Activated T-helper 1 cell treated with anti-CD3 and anti-CD28 coated beads, Interleukin-12 subunit alpha, Interleukin-12 subunit beta, Interleukin-2, Interleukin-4 antibody, amounts not matched to agents 30 ng/mL and 10 ng/mL and 1 ng/mL, durations not matched to agents 14 hours and 24 hours and 36 hours (primary cell): ENCODE measurements at regions of chr1 and their contacts with region 1.

Region 1: GRCh38 chr1:90964444-90965035 is 57.3 kb downstream of the ZNF644 start:
- DNase-seq: no peak
- H3K4me3 Mint-ChIP-seq: no peak overlapping the region
- H3K27ac Mint-ChIP-seq: no peak overlapping the region
- H3K4me1 Mint-ChIP-seq: peaks cover 15% of the 10 kb centered on the region
- H3K27me3 Mint-ChIP-seq: no peaks in the 10 kb centered on the region

Region 2: DNA sequence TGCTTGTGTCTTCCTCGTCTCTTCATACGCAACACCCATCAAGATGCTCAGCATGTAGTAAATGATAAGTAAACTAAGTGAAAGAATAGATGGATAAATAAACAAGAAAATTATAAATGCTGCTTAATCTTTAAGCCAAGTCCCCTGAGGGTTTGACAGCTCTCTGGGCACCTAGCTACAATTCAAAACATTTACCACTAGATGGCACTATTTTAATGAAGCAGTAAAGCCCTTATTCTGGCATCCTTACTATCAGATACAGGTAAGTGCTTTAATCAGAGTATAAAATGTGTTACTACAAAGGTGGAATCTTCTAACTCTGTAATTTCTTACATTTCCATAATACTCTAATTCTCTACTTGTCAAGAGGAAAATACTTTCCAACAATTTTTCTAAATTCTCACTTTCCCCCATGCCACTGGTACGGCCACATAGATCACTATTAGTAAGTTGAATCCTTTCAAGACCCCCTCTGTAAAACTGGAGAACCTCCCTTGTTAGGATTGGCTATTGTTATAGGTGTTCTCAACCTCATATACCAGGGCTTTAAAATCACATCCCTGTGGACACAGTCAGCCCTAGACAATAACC is 385.2 kb before region 1 on chr1:
- intact Hi-C with region 1: loop called (anchors 10 kb)
- DNase-seq: no peak
- H3K4me3 Mint-ChIP-seq: no peak overlapping the region
- H3K27ac Mint-ChIP-seq: no peak overlapping the region
- H3K4me1 Mint-ChIP-seq: no peaks in the 10 kb centered on the region
- H3K27me3 Mint-ChIP-seq: peaks cover 5% of the 10 kb centered on the region

Region 3: DNA sequence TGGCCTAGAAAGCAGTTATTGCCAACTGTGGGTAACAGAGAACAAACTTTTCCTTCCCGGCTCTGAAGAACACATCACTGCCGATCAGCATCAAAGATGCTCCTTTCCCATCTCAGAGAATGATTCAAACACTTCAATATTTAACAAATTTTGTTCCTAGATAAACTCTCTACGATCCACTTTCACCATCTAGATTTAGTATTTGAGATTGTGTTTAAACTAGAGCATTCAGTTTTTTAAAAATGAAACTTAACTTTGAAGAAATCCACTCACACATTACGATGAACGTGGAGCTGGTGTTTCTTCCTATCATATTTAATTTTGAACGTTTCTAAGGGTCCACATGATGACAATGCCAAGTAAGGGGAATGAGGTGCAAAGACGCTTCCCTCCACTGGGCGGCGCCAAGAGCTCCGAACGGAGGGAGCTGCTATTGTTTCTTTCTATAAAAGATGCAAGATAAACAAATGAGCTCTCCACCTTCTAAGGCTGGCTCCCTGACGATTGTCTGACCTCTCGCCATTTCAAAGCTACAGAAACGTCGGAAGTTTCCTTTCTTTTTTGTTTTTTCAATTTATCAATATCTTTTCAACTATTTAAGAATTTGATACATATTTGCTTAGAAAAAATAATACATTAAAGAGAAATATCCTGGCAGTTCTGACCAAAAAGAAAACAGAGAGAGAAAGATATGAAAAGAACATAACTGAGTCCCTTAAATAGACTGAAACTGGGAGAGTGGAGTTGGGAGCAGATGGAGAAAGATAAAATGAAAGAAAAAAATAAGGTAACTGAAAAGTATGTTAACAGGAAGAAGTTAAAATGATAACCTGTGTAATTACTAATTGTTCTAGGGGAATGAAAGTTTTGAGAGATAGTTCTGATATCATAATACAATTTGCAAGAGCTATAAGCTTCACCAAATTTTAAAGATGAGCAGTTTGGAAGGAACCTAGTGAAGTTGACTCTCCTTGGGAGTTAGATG is 243.0 kb before region 1 on chr1:
- intact Hi-C with region 1: loop called (anchors 1 kb)
- DNase-seq: peak; percentile 35
- H3K4me3 Mint-ChIP-seq: no peak overlapping the region
- H3K27ac Mint-ChIP-seq: peak overlapping the region; percentile 31
- H3K4me1 Mint-ChIP-seq: peaks cover 32% of the 10 kb centered on the region
- H3K27me3 Mint-ChIP-seq: peaks cover 85% of the 10 kb centered on the region

Region 4: GRCh38 chr1:90729504-90730242 is 234.9 kb before region 1 on chr1:
- intact Hi-C with region 1: loop called (anchors 2 kb)
- DNase-seq: no peak
- H3K4me3 Mint-ChIP-seq: no peak overlapping the region
- H3K27ac Mint-ChIP-seq: peak overlapping the region; percentile 18
- H3K4me1 Mint-ChIP-seq: peaks cover 41% of the 10 kb centered on the region
- H3K27me3 Mint-ChIP-seq: peaks cover 73% of the 10 kb centered on the region

Region 5: GRCh38 chr1:90850898-90851710 is 113.4 kb before region 1 on chr1:
- intact Hi-C with region 1: loop called (anchors 5 kb)
- DNase-seq: peak; percentile 67
- H3K4me3 Mint-ChIP-seq: peak overlapping the region; percentile 79
- H3K27ac Mint-ChIP-seq: no peak overlapping the region
- H3K4me1 Mint-ChIP-seq: peaks cover 17% of the 10 kb centered on the region
- H3K27me3 Mint-ChIP-seq: peaks cover 60% of the 10 kb centered on the region

Region 6: GRCh38 chr1:90919900-90920299 is 44.6 kb before region 1 on chr1:
- intact Hi-C with region 1: loop called (anchors 2 kb)
- DNase-seq: no peak
- H3K4me3 Mint-ChIP-seq: no peak overlapping the region
- H3K27ac Mint-ChIP-seq: no peak overlapping the region
- H3K4me1 Mint-ChIP-seq: peaks cover 41% of the 10 kb centered on the region
- H3K27me3 Mint-ChIP-seq: no peaks in the 10 kb centered on the region

Region 7: GRCh38 chr1:90986953-90987352 is 22.4 kb after region 1 on chr1:
- intact Hi-C with region 1: loop called (anchors 1 kb)
- DNase-seq: no peak
- H3K4me3 Mint-ChIP-seq: no peak overlapping the region
- H3K27ac Mint-ChIP-seq: no peak overlapping the region
- H3K4me1 Mint-ChIP-seq: peaks cover 19% of the 10 kb centered on the region
- H3K27me3 Mint-ChIP-seq: no peaks in the 10 kb centered on the region